Right cardiac atrium (tissue), 5 donors: ENCODE measurements at regions of chr11 and their contacts with region 1.

Region 1: GRCh38 chr11:120773501-120774031 is 250.3 kb upstream of the TBCEL start:
- DNase-seq: no peak
- ATAC-seq: no peak
- H3K4me3 ChIP-seq: no peak overlapping the region
- H3K27ac ChIP-seq: no peak overlapping the region
- H3K4me1 ChIP-seq: no peaks in the 10 kb centered on the region
- H3K27me3 ChIP-seq: peaks cover 2% of the 10 kb centered on the region

Region 2: GRCh38 chr11:120601536-120601935 is 172.0 kb before region 1 on chr11:
- intact Hi-C with region 1: no loop called
- DNase-seq: no peak
- ATAC-seq: no peak
- H3K4me3 ChIP-seq: no peak overlapping the region
- H3K27ac ChIP-seq: no peak overlapping the region
- H3K4me1 ChIP-seq: no peaks in the 10 kb centered on the region
- H3K27me3 ChIP-seq: no peaks in the 10 kb centered on the region

Region 3: DNA sequence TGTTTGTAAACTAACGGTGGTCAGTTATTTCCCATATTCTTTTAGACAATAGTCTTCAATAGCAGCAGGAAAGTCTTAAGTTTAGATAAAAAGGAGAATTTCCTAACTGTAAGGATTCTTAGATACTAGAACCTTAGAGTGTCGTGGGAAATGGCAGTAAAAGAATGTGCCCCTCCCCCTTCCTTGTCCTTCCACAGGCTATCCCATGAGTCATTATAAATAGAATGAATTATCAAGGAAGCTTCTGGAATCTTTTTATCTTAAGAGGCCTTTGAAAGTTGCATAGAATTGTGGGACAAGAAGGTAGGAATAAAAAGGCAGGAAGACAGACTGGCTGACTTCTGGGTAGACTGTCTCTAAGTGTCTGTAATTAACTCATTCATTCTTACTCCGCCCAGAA is 85.2 kb after region 1 on chr11:
- intact Hi-C with region 1: loop called in 1 of 4 experiments (anchors 10 kb)
- DNase-seq: no peak
- ATAC-seq: peak in 1 of 2 donors; percentile 55
- H3K4me3 ChIP-seq: no peak overlapping the region
- H3K27ac ChIP-seq: no peak overlapping the region
- H3K4me1 ChIP-seq: no peaks in the 10 kb centered on the region
- H3K27me3 ChIP-seq: no peaks in the 10 kb centered on the region